B cell (primary cell): ENCODE measurements at regions of chr1 and their contacts with region 1.

Region 1: GRCh38 chr1:150995896-150996295 is 10.8 kb downstream of the MINDY1 start:
- DNase-seq: peak; percentile 60
- ATAC-seq: peak; percentile 39
- H3K4me3 ChIP-seq: no peak overlapping the region
- H3K4me3 Mint-ChIP-seq: no peak overlapping the region
- H3K27ac ChIP-seq: no peak overlapping the region
- H3K27ac Mint-ChIP-seq: no peak overlapping the region
- H3K4me1 ChIP-seq: peaks cover 0 to 3% of the 10 kb centered on the region in 2 donors
- H3K4me1 Mint-ChIP-seq: peaks cover 4% of the 10 kb centered on the region
- H3K27me3 ChIP-seq: no peaks in the 10 kb centered on the region
- H3K27me3 Mint-ChIP-seq: no peaks in the 10 kb centered on the region
- CTCF ChIP-seq: peak; percentile 88

Region 2: DNA sequence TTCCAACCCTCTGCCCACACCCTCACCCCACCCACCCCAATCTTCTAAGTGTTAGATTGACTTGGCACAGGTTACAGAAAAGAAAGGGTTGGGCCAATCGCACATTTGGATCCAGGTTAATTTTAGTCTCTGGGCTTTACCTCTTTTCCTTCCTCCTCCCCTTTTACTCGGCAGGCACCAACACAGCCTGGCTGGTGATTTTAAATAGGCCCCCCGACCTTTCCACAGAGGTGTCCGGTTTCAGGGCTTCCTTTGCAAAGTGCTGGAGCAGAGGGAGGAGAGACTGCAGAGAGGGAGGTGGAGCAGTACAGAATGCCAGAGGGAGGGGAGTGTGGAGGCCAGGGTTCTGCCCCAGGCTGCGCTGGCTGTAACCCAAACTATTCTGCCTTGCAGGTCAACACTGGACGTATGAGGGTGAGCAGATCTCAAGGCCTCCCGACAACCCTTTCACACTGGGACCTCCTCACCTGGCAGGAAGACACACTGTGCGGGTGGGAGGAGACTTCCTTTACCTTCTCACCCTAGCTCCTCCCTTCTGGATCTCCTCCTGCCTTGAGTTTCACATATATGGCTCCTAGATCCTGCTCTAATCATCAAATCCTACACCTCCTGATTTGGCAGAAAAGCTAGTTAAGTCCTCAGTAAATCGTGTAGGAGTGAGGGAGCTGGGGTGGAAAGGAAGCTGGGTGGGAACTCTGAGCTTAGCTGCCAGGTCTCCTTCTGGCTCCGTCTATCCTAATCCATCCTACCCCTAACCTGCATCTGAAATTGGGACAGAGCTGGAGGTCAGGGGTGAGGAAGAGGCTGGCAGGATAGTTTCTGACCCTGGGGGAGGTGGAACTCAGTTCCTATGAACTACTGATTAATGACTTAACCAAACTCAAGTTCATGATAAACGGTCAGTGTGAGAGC is 735.9 kb before region 1 on chr1:
- CTCF ChIA-PET with region 1: interaction called, 5 read pairs
- POLR2A ChIA-PET with region 1: no interaction called
- intact Hi-C with region 1: loop called (anchors 10 kb)
- DNase-seq: no peak
- ATAC-seq: no peak
- H3K4me3 ChIP-seq: no peak overlapping the region
- H3K4me3 Mint-ChIP-seq: no peak overlapping the region
- H3K27ac ChIP-seq: no peak overlapping the region
- H3K27ac Mint-ChIP-seq: no peak overlapping the region
- H3K4me1 ChIP-seq: peaks cover 14 to 15% of the 10 kb centered on the region in 2 donors
- H3K4me1 Mint-ChIP-seq: peaks cover 13% of the 10 kb centered on the region
- H3K27me3 ChIP-seq: peaks cover 0 to 36% (median 24%) of the 10 kb centered on the region in 4 experiments
- H3K27me3 Mint-ChIP-seq: peaks cover 40% of the 10 kb centered on the region
- CTCF ChIP-seq: no peak

Region 3: DNA sequence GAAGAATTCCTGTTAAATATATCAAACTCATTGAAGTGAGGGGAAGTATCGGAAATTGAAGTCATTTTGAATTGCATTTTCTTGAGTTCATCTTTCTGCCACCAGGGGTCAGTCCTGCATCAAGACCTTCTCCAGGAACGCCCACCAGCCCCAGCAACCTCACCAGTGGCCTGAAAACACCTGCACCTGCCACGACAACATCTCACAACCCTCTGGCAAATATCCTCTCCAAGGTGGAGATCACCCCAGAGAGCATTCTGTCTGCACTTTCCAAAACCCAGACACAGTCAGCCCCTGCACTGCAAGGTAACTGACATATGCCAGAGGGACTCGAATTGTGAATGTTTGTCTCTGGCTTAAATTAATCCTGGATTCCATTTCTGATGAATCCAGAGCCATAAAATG is 531.5 kb before region 1 on chr1:
- CTCF ChIA-PET with region 1: interaction called, 4 read pairs
- POLR2A ChIA-PET with region 1: no interaction called
- intact Hi-C with region 1: loop called (anchors 5 kb)
- DNase-seq: peak; percentile 83
- ATAC-seq: peak; percentile 74
- H3K4me3 ChIP-seq: no peak overlapping the region
- H3K4me3 Mint-ChIP-seq: no peak overlapping the region
- H3K27ac ChIP-seq: no peak overlapping the region
- H3K27ac Mint-ChIP-seq: peak overlapping the region; percentile 5
- H3K4me1 ChIP-seq: peaks cover 0 to 3% of the 10 kb centered on the region in 2 donors
- H3K4me1 Mint-ChIP-seq: peaks cover 4% of the 10 kb centered on the region
- H3K27me3 ChIP-seq: no peaks in the 10 kb centered on the region
- H3K27me3 Mint-ChIP-seq: no peaks in the 10 kb centered on the region
- CTCF ChIP-seq: peak; percentile 82

Region 4: DNA sequence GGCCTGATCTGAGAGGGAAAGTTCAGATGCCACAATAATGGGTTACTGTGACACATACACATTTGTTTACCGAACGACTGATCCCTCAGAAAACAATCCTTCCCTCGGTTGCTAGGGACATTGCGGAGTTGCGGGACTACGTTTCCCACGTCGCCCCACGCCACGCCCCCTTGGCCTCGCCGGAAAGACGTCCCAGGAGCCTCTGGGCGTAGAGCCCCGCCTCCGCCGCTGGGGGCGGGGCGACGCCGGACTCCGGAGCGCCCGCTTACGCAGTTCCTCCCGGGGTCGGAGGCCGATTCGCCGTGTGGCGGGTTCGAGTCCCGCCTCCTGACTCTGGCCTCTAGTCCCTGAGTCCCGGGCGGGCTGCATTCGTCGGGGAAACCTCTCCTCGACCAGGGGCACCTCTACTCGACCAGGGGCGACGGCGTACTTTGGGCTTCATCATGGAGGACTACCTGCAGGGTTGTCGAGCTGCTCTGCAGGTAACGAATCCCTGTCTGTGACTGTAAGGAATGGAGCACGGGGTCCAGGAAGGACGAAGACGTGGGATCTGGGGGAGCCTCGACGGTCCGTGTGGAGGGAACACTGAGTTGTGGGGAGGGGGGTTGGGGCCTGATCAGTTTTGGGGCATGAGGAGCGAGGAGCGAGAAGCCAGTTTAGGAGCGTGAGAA is 12.4 kb after region 1 on chr1 and contains the start of gene PRUNE1:
- CTCF ChIA-PET with region 1: interaction called, 63 read pairs
- POLR2A ChIA-PET with region 1: interaction called, 3 read pairs
- intact Hi-C with region 1: loop called (anchors 1 kb)
- DNase-seq: peak; percentile 98
- ATAC-seq: peak; percentile 97
- H3K4me3 ChIP-seq: peak within 1 kb of the TSS; percentile 74 to 98 (median 85)
- H3K4me3 Mint-ChIP-seq: peak within 1 kb of the TSS; percentile 90
- H3K27ac ChIP-seq: peak within 1 kb of the TSS; percentile 82 to 95
- H3K27ac Mint-ChIP-seq: peak within 1 kb of the TSS; percentile 94
- H3K4me1 ChIP-seq: peaks cover 39 to 55% of the 10 kb centered on the region in 2 donors
- H3K4me1 Mint-ChIP-seq: peaks cover 66% of the 10 kb centered on the region
- H3K27me3 ChIP-seq: no peaks in the 10 kb centered on the region
- H3K27me3 Mint-ChIP-seq: no peaks in the 10 kb centered on the region
- CTCF ChIP-seq: no peak
- total RNA-seq, gene PRUNE1: 20.8 and 21.3 TPM in 2 replicates

Region 5: GRCh38 chr1:151568626-151569088 is 572.8 kb after region 1 on chr1:
- CTCF ChIA-PET with region 1: no interaction called
- POLR2A ChIA-PET with region 1: no interaction called
- intact Hi-C with region 1: no loop called
- DNase-seq: no peak
- ATAC-seq: no peak
- H3K4me3 ChIP-seq: no peak overlapping the region
- H3K4me3 Mint-ChIP-seq: no peak overlapping the region
- H3K27ac ChIP-seq: no peak overlapping the region
- H3K27ac Mint-ChIP-seq: no peak overlapping the region
- H3K4me1 ChIP-seq: no peaks in the 10 kb centered on the region
- H3K4me1 Mint-ChIP-seq: no peaks in the 10 kb centered on the region
- H3K27me3 ChIP-seq: no peaks in the 10 kb centered on the region
- H3K27me3 Mint-ChIP-seq: no peaks in the 10 kb centered on the region
- CTCF ChIP-seq: no peak

Region 6: GRCh38 chr1:151898513-151898991 is 902.7 kb after region 1 on chr1:
- CTCF ChIA-PET with region 1: no interaction called
- POLR2A ChIA-PET with region 1: no interaction called
- intact Hi-C with region 1: no loop called
- DNase-seq: no peak
- ATAC-seq: no peak
- H3K4me3 ChIP-seq: no peak overlapping the region
- H3K4me3 Mint-ChIP-seq: no peak overlapping the region
- H3K27ac ChIP-seq: no peak overlapping the region
- H3K27ac Mint-ChIP-seq: no peak overlapping the region
- H3K4me1 ChIP-seq: no peaks in the 10 kb centered on the region
- H3K4me1 Mint-ChIP-seq: peaks cover 3% of the 10 kb centered on the region
- H3K27me3 ChIP-seq: peaks cover 0 to 2% (median 0%) of the 10 kb centered on the region in 4 experiments
- H3K27me3 Mint-ChIP-seq: no peaks in the 10 kb centered on the region
- CTCF ChIP-seq: no peak